Activated CD8-positive, alpha-beta T cell treated with anti-CD3 and anti-CD28 coated beads for 36 hours (primary cell): ENCODE measurements at regions of chr9 and their contacts with region 1.

Region 1: GRCh38 chr9:994005-994404 is 17.6 kb downstream of the DMRT3 start:
- DNase-seq: no peak
- ATAC-seq: peak; percentile 30
- H3K4me3 Mint-ChIP-seq: no peak overlapping the region
- H3K27ac Mint-ChIP-seq: no peak overlapping the region
- H3K4me1 Mint-ChIP-seq: peaks cover 3% of the 10 kb centered on the region
- H3K27me3 Mint-ChIP-seq: peaks cover 19% of the 10 kb centered on the region
- CTCF ChIP-seq: no peak

Region 2: DNA sequence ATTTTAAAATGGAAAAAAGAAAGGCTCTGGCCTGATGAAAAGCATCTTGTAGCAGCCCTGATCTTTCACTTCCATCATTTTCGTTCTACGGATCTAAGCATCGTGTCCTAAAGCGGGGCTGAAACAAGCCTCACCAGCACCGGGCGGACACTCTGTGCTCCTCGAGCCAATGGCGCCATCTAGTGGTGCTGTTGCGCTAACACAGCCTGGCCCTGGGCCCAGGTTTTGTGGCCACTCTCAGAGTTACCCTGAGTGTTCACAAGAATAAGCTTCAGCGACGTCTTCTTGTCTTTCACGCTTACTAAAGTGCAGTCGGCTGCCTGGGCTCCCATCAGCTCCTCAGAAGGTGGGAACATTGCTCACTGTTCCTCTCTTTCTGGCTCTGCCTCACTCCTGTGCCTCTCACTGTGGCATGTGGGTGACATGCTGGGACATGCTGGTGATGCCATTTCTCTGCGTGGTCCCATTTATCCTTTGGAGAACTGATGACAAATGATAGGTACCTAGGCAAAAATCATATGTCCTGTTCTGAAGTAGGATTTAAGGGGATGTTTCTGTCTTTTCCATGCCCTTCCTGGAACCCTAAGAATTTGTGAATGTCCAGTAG is 15.2 kb after region 1 on chr9:
- CTCF ChIA-PET with region 1: interaction called, 18 read pairs
- POLR2A ChIA-PET with region 1: no interaction called
- intact Hi-C with region 1: no loop called
- DNase-seq: peak; percentile 82
- ATAC-seq: peak; percentile 99
- H3K4me3 Mint-ChIP-seq: no peak overlapping the region
- H3K27ac Mint-ChIP-seq: no peak overlapping the region
- H3K4me1 Mint-ChIP-seq: peaks cover 3% of the 10 kb centered on the region
- H3K27me3 Mint-ChIP-seq: peaks cover 34% of the 10 kb centered on the region
- CTCF ChIP-seq: peak; percentile 89